ENCODE measurements at regions of chr11 and their contacts with region 1.

Region 1: GRCh38 chr11:105609341-105609781 is 512 bp upstream of the GRIA4 start:
- DNase-seq: no peak
- H3K4me3 ChIP-seq: no peak overlapping the region
- H3K27ac ChIP-seq: no peak overlapping the region
- H3K4me1 ChIP-seq: no peaks in the 10 kb centered on the region
- H3K27me3 ChIP-seq: no peaks in the 10 kb centered on the region
- CTCF ChIP-seq: peak; percentile 52

Region 2: DNA sequence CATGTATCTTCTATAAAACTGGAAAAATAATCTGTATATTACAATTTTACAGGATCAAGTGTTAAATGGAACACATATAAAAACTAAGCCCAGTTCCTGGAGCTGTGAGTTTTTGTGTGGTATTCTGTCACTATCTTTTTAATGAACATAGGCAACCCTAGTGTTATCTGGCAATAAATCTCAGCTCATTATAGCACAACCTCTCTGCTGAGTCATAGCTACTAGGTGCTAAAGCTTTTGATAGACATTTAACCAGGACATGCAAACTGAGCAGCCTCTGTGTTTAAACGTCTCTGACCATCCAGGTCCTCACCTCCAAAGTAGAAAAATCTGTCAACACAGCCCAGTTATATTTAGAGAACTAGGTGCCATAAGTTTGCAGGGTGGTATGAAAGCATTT is 378.8 kb before region 1 on chr11:
- CTCF ChIA-PET with region 1: no interaction called
- POLR2A ChIA-PET with region 1: interaction called, 11 read pairs
- intact Hi-C with region 1: no loop called
- DNase-seq: peak; percentile 2 to 42
- H3K4me3 ChIP-seq: no peak overlapping the region
- H3K27ac ChIP-seq: peak overlapping the region; percentile 0; the same call in 1 of the 2 replicates
- H3K4me1 ChIP-seq: peaks cover 13% of the 10 kb centered on the region
- H3K27me3 ChIP-seq: no peaks in the 10 kb centered on the region
- CTCF ChIP-seq: no peak